H1 (cell line): ENCODE measurements at regions of chr16 and their contacts with region 1.

Region 1: DNA sequence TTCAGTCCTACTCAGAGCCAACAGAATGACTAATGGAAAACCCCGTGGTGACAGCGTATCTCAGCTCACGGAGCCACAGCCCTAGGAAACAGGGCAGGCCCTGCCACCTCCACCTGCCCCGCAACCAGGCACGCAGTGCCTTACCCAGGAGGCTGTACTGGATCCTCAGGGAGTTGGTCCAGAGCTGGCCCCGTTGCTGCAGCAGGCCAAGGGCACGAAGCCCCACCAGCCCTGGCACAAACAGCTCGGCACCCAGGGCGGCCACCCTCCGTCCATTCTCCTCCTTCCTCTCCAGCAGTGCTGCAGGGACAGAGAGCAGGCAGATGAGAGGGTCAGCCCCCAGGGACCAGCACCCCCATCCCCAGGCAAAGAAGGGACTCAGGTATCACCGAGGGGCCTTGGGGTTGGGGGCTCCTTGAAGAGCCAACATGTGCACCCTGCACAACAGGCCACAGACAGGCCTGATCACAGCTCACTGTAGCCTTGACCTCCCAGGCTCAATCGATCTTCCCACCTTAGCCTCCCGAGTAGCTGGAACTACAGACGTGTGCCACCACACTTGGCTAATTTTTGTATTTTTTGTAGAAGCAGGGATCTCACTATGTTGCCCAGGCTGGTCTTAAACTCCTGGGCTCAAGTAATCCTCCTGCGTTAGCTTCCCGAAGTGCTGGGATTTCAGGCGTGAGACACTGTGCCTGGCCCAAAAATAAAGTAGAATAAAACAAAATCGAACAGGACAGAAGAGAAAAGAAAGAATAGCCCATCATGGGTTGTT is 115.7 kb downstream of the RMI2 start:
- DNase-seq: no peak
- H3K4me3 ChIP-seq: no peak overlapping the region
- H3K27ac ChIP-seq: no peak overlapping the region
- H3K4me1 ChIP-seq: no peaks in the 10 kb centered on the region
- H3K27me3 ChIP-seq: no peaks in the 10 kb centered on the region
- CTCF ChIP-seq: no peak
- EP300 ChIP-seq: no peak
- POLR2A ChIP-seq: no peak
- RAD21 ChIP-seq: no peak

Region 2: GRCh38 chr16:11423315-11424117 is 37.5 kb before region 1 on chr16:
- CTCF ChIA-PET with region 1: no interaction called
- POLR2A ChIA-PET with region 1: no interaction called
- DNase-seq: no peak
- H3K4me3 ChIP-seq: no peak overlapping the region
- H3K27ac ChIP-seq: no peak overlapping the region
- H3K4me1 ChIP-seq: no peaks in the 10 kb centered on the region; a peak in 1 of 7 replicates
- H3K27me3 ChIP-seq: no peaks in the 10 kb centered on the region
- CTCF ChIP-seq: no peak
- EP300 ChIP-seq: no peak
- POLR2A ChIP-seq: no peak
- RAD21 ChIP-seq: no peak

Region 3: GRCh38 chr16:11474617-11475291 is 13.7 kb after region 1 on chr16:
- CTCF ChIA-PET with region 1: interaction called, 11 read pairs
- POLR2A ChIA-PET with region 1: interaction called, 3 read pairs
- DNase-seq: no peak
- H3K4me3 ChIP-seq: no peak overlapping the region
- H3K27ac ChIP-seq: no peak overlapping the region
- H3K4me1 ChIP-seq: no peaks in the 10 kb centered on the region
- H3K27me3 ChIP-seq: no peaks in the 10 kb centered on the region
- CTCF ChIP-seq: no peak
- EP300 ChIP-seq: no peak
- POLR2A ChIP-seq: no peak
- RAD21 ChIP-seq: no peak